Calu3 (cell line): ENCODE measurements at regions of chr10 and their contacts with region 1.

Region 1: GRCh38 chr10:29982997-29983648 is 76.3 kb downstream of the JCAD start:
- DNase-seq: no peak
- H3K4me3 Mint-ChIP-seq: no peak overlapping the region
- H3K27ac Mint-ChIP-seq: no peak overlapping the region
- H3K4me1 Mint-ChIP-seq: no peaks in the 10 kb centered on the region
- H3K27me3 Mint-ChIP-seq: no peaks in the 10 kb centered on the region
- CTCF ChIP-seq: no peak

Region 2: GRCh38 chr10:29646238-29646902 is 336.8 kb before region 1 on chr10:
- CTCF ChIA-PET with region 1: no interaction called
- intact Hi-C with region 1: no loop called
- DNase-seq: no peak
- H3K4me3 Mint-ChIP-seq: no peak overlapping the region
- H3K27ac Mint-ChIP-seq: peak overlapping the region; percentile 39
- H3K4me1 Mint-ChIP-seq: peaks cover 79% of the 10 kb centered on the region
- H3K27me3 Mint-ChIP-seq: no peaks in the 10 kb centered on the region
- CTCF ChIP-seq: no peak

Region 3: DNA sequence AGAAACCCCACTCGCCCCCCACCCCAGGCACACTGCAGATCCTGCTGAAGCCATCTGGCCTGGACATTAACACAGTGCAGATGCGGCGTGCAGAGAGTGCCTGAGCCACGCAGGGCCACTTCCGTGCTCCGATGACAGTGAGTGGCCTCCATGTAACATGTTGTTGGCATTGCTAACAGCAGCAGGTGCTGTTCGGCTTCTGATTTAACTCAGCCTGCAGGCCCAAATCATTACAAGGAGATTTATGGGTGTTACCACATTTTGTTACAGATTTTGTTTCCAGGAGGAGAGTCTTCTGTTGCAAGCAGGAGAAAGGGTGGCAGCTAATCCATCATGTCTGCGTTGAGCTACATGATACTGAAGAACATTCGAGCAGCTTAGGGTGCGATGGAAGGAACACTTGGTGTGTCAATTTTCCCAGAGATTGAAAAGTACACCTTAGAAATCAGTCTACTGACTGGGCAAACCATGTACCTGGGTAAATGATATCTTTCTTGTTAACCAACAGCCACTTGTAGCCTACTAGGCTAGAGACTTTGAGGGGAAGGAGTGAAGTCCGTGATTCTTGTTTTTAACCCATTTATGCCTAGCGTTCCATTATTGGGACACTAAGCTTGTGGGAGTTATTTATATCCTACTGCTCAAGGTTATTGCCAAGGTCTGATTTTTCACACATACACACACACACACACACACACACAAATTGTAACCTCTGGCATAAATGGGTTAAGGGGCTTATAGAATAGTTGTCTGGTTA is 13.7 kb before region 1 on chr10:
- CTCF ChIA-PET with region 1: interaction called, 17 read pairs
- intact Hi-C with region 1: no loop called
- DNase-seq: no peak
- H3K4me3 Mint-ChIP-seq: no peak overlapping the region
- H3K27ac Mint-ChIP-seq: no peak overlapping the region
- H3K4me1 Mint-ChIP-seq: peaks cover 7% of the 10 kb centered on the region
- H3K27me3 Mint-ChIP-seq: no peaks in the 10 kb centered on the region
- CTCF ChIP-seq: no peak